A673 (cell line): ENCODE measurements at regions of chr13 and their contacts with region 1.

Region 1: DNA sequence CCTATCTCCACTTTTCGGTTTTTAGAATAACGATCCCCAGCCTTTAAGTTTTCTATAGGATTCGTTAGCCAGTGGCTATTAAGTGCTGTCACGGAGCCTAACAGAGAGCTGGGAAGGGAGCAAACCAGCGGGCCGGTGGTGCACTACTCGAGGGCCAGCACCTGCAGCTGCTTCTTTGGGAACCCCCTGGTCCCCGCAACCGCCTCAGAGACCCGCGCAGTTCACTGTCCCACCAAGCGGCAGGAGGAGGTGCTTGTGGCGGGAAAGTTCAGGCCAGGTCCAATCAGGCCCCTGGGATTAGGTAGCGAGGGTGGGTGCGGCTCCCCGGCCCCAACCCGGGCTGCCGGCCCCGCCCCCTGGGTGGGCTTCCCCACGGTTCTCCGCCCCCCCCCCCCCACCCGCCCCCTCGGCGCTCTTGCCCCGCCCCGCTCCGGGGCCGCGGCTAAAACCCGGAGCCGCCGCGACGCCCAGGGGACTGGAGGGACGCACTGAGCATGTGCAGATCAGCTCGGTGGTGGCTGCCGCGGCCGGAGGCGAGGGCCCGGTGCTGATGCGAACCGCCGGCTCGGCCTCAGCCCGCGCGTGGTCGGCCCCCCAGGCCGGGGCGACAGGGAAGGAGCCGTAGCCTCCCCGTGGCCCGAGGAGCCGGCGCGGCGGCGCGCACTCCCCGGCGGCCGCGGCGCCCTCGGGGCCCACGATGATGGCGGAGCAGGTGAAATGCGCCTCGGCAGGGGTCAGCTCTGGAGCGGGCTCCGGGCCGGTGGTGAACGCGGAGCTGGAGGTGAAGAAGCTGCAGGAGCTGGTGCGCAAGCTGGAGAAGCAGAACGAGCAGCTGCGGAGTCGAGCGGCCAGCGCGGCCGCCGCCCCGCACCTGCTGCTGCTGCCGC is at the start of gene SLAIN1:
- DNase-seq: peak; percentile 95
- H3K4me3 ChIP-seq: peak within 1 kb of the TSS; percentile 83
- H3K27ac ChIP-seq: peak within 1 kb of the TSS; percentile 98
- H3K4me1 ChIP-seq: peaks cover 47% of the 10 kb centered on the region
- H3K27me3 ChIP-seq: no peaks in the 10 kb centered on the region
- CTCF ChIP-seq: no peak
- total RNA-seq, gene SLAIN1: 267 and 314 TPM in 2 replicates

Region 2: GRCh38 chr13:77329133-77329910 is 368.1 kb before region 1 on chr13:
- CTCF ChIA-PET with region 1: no interaction called
- POLR2A ChIA-PET with region 1: no interaction called
- intact Hi-C with region 1: loop called (anchors 5 kb)
- DNase-seq: peak; percentile 97
- H3K4me3 ChIP-seq: peak overlapping the region; percentile 80
- H3K27ac ChIP-seq: peak overlapping the region; percentile 89
- H3K4me1 ChIP-seq: peaks cover 20% of the 10 kb centered on the region
- H3K27me3 ChIP-seq: no peaks in the 10 kb centered on the region
- CTCF ChIP-seq: no peak

Region 3: DNA sequence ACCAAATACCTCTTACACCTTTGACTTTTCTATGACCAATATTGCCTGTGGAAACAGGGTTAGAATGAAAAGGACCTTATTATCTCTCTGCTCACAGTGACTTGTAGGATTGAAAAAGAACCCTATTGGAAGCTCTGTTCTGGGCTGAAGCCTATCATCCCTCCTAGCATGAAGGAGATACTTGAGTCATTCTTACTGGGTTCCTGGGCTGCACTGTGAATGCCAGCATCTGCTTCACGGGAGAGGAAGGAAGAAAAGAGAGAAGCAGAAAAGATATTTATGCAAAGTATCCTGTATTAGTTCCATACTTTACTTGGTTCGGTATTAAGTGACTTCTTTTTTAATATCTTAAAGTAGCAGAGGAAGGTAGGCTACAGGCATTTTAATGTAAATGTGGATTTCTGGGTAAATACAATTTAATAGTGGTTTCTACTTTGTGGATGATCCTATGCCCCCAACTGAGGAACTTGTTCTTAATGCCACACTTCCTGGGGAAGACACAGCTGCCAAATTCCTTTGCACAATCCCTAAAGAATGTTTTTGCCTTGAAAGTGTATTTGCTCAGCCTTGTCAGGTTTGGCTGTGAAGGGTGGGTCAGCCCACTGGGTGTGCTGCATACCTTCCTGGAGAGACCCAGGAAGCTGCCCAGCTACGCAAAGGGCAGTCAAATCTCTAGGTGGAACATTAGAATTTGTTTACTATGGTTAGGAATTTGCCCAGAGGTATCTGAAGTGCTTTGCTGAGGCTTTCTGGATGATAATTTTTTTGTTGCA is 175.7 kb before region 1 on chr13:
- CTCF ChIA-PET with region 1: no interaction called
- POLR2A ChIA-PET with region 1: no interaction called
- intact Hi-C with region 1: loop called (anchors 1 kb)
- DNase-seq: peak; percentile 92
- H3K4me3 ChIP-seq: no peak overlapping the region
- H3K27ac ChIP-seq: peak overlapping the region; percentile 63
- H3K4me1 ChIP-seq: peaks cover 47% of the 10 kb centered on the region
- H3K27me3 ChIP-seq: no peaks in the 10 kb centered on the region
- CTCF ChIP-seq: peak; percentile 32; the same call in 1 of the 2 replicates

Region 4: DNA sequence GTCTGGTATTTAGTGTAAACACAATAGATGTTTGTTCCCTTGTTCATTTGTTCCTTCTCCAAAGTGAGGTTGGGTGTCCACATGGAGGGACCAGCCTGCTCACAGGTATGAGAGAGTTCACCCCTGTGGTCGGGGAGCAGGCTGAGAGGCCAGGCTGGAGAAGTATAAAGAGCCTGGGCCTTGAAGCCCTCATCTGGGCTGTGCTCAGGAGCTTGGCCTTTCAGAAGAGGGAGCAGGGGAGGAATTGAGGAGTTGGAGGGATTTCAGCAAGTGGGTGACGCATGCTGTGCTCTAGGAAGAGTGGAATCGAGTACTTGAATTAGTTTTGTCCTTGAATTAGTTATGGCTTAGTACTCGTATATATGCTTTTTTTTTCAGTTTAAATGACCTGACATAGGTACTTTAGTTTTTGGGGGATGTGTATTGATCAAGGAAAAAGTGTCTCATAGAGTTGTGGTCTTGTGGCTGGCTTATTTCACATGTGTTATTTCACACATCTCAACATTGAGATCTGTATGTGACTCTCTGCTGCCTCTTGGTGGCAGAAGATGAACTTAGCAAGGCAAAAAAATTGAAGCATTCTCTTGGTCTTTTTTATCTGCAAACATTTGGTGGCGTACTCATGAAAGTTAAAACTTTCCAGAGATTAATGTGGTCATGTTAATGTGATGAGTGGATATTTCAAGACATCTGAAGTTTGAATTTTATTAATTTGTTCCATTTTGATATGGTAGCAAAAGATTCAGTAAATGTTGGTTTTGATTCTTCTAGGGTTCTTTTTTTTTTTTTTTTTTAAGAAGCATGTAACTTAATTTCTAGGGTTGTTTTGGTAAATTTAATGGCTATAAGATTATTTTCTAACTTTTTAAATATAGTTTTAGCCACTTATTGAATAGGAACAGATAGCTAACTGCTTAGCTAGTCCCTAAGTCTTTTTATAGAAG is 54.3 kb after region 1 on chr13:
- CTCF ChIA-PET with region 1: no interaction called
- POLR2A ChIA-PET with region 1: no interaction called
- intact Hi-C with region 1: loop called (anchors 2 kb)
- DNase-seq: peak; percentile 86
- H3K4me3 ChIP-seq: peak overlapping the region; percentile 5
- H3K27ac ChIP-seq: peak overlapping the region; percentile 84
- H3K4me1 ChIP-seq: peaks cover 64% of the 10 kb centered on the region
- H3K27me3 ChIP-seq: no peaks in the 10 kb centered on the region
- CTCF ChIP-seq: peak; percentile 86

Region 5: DNA sequence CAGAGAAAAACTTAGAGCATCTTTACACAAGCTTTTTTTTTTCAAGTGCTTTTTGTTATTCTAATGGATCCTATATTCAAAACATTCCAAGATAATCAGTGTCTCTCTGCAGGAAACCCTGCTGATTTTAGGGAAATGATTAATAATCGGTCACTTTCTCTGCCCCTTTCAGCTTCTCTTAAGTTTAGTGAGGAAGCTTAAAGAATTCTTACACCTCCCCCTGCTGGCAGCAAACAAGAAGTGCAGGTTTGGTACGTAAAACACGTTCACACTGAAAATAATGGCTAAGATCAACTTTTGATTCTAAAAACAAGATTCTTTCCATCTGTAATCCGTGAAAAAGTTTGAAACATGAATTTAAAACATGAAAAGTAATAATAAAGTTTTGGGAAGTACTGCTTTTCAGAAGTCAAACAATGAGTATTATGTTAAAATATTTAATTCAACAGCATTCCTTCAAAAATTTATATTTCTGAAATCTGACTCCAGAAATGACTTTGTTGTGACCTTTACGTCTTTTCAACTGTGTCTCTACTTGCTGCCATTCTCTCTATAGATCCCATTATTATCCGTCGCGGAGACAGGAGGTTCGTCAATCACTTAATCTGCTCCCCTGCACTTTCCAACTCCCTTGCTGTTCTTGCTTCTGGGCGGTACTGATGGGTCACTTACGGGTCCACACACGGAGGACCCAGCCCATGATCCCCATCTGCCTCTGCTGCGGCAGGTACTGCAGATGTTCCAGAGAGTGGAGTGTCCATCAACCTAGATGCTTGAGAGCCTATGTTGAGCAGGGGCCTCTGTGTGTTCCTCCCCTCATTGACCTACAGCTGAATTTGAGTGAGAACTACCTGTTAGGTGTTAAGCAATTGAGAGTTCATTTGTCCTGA is 424.2 kb after region 1 on chr13:
- CTCF ChIA-PET with region 1: no interaction called
- POLR2A ChIA-PET with region 1: no interaction called
- intact Hi-C with region 1: loop called (anchors 2 kb)
- DNase-seq: peak; percentile 84
- H3K4me3 ChIP-seq: no peak overlapping the region
- H3K27ac ChIP-seq: no peak overlapping the region
- H3K4me1 ChIP-seq: no peaks in the 10 kb centered on the region
- H3K27me3 ChIP-seq: no peaks in the 10 kb centered on the region
- CTCF ChIP-seq: peak; percentile 91